Activated CD4-positive, alpha-beta memory T cell treated with anti-CD3 and anti-CD28 coated beads for 36 hours (primary cell): ENCODE measurements at regions of chr4 and their contacts with region 1.

Region 1: GRCh38 chr4:13654158-13654797 is 26.8 kb upstream of the BOD1L1 start:
- DNase-seq: peak; percentile 88
- H3K4me3 Mint-ChIP-seq: peak overlapping the region; percentile 75
- H3K27ac Mint-ChIP-seq: no peak overlapping the region
- H3K4me1 Mint-ChIP-seq: peaks cover 15% of the 10 kb centered on the region
- H3K27me3 Mint-ChIP-seq: peaks cover 2% of the 10 kb centered on the region

Region 2: DNA sequence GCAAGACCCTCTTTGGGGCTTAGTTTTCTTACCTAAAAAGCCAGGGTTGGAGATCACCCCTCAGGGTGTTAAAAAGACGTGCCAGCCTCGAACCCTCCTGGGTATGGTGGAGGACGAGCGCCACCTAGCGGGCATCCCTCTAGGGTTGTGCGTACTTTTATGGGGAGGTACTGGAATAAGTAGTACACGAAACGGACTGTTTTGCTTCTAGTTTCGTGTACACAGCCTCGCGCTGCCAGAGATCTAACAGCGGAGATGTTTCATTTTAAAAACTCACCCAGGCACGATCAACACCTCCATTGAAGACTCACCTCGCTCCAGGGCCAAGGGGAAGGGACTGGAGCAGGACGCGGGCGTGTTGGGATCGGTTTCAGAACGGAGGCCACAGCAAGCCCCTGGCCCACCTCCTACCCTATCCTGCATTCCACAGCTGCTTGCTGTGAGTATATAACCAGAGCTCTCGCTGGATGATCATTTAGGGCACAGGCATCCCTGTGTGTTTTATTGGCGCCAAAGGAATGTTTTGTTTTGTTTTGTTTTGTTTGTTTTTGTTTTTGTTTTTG is 105.2 kb before region 1 on chr4:
- CTCF ChIA-PET with region 1: no interaction called
- POLR2A ChIA-PET with region 1: no interaction called
- intact Hi-C with region 1: loop called (anchors 1 kb)
- DNase-seq: peak; percentile 92
- H3K4me3 Mint-ChIP-seq: peak overlapping the region; percentile 64
- H3K27ac Mint-ChIP-seq: no peak overlapping the region
- H3K4me1 Mint-ChIP-seq: peaks cover 30% of the 10 kb centered on the region
- H3K27me3 Mint-ChIP-seq: peaks cover 63% of the 10 kb centered on the region

Region 3: DNA sequence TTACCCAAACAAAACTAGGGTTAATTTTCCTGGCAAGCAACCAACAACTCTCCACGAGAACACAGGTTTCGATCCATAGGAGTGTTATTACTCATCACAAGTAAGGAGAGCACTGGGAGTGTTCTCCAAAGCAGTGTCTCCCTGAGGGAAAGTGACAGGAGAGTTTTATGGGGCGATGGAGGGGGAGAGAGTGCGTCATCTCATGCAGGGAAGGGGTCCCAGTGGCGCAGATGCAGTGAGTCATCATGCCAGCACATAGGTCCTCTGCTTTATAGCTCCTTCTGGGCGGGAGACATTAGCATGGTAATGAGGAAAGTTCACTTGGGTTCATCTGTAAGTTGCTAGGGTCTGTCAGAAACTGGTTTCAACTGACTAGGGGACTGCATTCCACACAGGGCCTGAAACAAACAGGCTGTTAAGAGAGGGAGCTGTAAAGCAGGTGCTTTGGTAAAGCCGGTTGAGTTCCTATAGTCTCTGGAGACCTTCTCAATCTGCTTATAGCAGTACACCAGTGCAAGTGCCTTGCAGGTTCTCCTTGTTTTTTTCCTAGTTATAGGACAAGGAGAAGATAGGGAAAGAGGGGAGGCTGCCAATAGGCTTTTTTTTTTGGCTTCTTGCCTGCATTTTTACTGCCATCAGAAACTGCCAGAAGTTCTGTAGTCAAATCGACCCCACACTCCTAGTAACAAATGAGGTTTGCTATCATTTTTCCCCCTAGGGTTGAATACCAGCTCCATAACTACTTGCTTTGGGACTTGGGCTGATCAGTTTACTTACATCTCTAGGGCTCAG is 13.9 kb before region 1 on chr4:
- CTCF ChIA-PET with region 1: interaction called, 19 read pairs
- POLR2A ChIA-PET with region 1: no interaction called
- intact Hi-C with region 1: no loop called
- DNase-seq: no peak
- H3K4me3 Mint-ChIP-seq: no peak overlapping the region
- H3K27ac Mint-ChIP-seq: no peak overlapping the region
- H3K4me1 Mint-ChIP-seq: no peaks in the 10 kb centered on the region
- H3K27me3 Mint-ChIP-seq: peaks cover 26% of the 10 kb centered on the region

Region 4: DNA sequence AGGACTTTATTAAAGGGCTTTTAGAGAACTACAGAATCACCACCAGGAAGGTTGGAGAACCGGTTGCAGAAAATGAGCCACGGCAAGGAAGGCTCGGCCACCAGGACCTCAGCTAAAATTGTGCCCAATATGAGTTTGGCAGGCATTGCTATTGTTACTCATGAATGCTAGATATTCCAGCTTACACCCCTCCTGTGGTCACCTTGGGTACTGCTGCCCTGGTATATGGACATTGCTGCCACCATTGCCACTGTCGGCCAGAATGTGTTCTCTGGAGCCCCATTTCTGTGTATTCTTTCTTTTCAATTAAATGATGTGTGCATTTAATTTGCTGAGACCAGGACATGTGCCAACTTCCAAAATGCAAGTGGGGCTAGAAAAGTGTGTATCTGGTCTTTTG is 600.0 kb after region 1 on chr4:
- CTCF ChIA-PET with region 1: no interaction called
- POLR2A ChIA-PET with region 1: no interaction called
- intact Hi-C with region 1: loop called (anchors 10 kb)
- DNase-seq: no peak
- H3K4me3 Mint-ChIP-seq: no peak overlapping the region
- H3K27ac Mint-ChIP-seq: no peak overlapping the region
- H3K4me1 Mint-ChIP-seq: no peaks in the 10 kb centered on the region
- H3K27me3 Mint-ChIP-seq: no peaks in the 10 kb centered on the region

Region 5: DNA sequence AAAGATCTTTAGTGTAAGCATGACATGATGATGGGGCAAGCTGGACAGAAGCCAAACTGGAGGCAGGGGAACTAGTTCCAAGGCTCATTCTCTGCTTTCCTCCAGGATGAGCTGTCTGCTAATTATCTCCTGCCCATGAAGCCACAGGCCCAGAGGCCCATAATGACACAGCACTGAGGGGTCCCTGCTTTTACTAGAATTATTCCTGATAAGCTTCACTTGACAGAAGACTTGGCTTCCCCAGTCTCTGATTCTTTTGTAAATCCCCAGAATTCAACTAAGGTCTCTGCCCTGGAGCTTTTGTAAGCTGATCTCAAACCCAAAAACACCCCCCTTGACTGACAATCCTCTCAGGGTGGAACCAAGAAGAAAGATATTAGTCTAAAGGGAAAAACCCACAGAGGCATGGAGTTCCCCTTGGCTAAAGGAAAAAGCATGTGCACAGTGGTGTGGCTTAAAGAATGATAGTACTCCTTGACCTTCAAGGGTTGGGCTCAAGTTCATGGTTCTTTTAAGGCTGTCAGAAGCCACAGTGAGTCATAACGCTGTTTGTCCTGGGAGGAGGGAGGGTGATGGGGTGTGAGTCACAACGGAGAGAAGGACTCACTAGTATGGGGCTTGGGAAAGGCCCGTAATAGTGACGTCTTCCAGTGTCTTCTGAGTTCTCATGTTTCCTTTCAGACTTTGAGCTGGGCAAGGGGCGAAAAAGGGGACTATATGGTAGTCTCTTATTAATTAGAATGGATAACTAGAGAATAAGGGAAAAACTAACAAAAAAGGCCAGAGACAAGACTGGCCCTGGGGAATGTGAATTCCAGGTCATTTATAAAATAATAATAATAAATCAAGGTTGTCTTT is 1202.0 kb after region 1 on chr4:
- CTCF ChIA-PET with region 1: interaction called, 4 read pairs
- POLR2A ChIA-PET with region 1: no interaction called
- intact Hi-C with region 1: loop called (anchors 1 kb)
- DNase-seq: peak; percentile 89
- H3K4me3 Mint-ChIP-seq: no peak overlapping the region
- H3K27ac Mint-ChIP-seq: peak overlapping the region; percentile 79
- H3K4me1 Mint-ChIP-seq: peaks cover 27% of the 10 kb centered on the region
- H3K27me3 Mint-ChIP-seq: peaks cover 4% of the 10 kb centered on the region

Region 6: DNA sequence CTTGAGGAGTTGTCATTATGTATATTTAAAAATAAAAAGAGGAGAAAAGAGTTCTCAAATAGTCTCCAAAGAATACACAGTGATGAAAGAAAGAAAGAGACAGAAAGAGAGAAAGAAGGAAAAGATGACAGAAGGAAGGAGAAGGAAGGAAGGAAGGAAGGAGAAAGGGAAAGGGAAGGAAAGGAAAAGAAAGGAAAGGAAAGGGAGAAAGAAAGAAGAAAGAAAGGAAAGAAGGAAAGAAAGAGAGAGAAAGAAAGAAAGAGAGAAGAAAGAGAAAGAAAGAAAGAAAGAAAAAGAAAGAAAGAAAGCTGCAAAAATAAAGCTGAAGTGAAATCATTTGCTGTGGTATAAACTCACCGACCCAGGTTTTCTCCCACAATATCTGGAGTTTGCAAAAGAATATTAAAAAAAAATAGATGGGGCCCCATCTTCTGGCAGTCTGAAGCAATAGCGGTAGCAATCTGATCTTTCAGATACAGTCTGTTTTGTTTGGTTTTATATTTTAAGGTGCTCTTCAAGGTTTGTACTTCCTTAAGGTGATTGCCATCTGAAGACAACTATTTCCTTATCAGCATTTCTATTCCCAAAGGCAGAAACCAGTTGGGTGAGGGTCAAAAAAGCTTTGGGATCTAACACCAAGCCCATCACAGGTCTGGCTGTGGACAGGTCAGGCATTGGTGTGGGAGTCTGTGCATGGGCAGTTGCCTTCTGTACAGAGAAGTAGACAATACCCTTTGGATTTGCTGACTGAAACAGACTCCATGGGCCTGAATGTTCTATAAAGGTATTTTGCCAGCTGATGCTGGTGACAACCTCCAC is 1508.4 kb after region 1 on chr4:
- CTCF ChIA-PET with region 1: no interaction called
- POLR2A ChIA-PET with region 1: no interaction called
- intact Hi-C with region 1: loop called (anchors 1 kb)
- DNase-seq: no peak
- H3K4me3 Mint-ChIP-seq: no peak overlapping the region
- H3K27ac Mint-ChIP-seq: no peak overlapping the region
- H3K4me1 Mint-ChIP-seq: no peaks in the 10 kb centered on the region
- H3K27me3 Mint-ChIP-seq: peaks cover 17% of the 10 kb centered on the region

Region 7: DNA sequence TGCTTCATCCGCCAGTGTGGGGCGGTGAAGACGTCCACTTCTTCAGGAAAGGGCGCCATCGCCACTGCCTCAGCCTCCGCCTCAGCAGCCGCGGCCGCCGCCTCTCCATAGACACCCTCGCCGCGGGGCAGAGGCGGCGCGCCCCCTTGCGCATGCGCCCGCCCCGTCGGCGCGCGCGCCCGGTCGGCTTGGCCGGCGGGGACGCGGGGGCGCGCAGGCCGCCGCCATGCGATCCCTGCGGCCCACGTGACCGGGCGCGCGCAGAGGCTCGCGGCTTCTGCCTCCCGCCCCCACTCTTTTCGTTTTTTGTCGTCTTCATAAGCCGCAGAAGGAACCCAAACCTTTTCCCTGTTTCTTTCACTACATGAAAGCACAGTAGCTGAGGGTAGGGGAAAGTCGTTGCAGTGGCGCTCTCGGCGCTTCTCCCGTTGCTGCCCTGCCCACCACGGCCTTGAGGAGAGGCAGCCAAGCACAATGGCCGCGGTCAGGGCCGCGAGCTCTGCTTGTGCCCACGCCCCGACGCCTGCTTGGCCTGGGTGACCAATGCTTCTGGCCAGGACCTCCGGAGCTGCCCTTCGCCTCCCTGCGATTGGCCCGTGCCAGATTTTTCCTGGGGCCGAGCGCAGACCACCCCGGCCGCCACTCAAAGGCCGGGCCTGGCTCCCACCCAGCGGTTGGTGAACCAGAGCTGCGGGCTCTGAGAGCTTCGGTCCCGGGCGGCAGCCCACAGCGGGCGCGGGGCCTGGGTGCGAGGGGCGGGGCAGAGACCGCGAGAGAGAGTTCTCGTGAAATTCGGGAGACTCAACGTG is 2001.2 kb after region 1 on chr4 and contains the start of gene FBXL5:
- CTCF ChIA-PET with region 1: interaction called, 3 read pairs
- POLR2A ChIA-PET with region 1: no interaction called
- intact Hi-C with region 1: loop called (anchors 10 kb)
- DNase-seq: peak; percentile 89
- H3K4me3 Mint-ChIP-seq: peak within 1 kb of the TSS; percentile 93
- H3K27ac Mint-ChIP-seq: peak within 1 kb of the TSS; percentile 94
- H3K4me1 Mint-ChIP-seq: peaks cover 61% of the 10 kb centered on the region
- H3K27me3 Mint-ChIP-seq: no peaks in the 10 kb centered on the region
- total RNA-seq, gene FBXL5: 26.5 to 30.4 TPM